ENCODE measurements at regions of chr6 and their contacts with region 1.

Region 1: DNA sequence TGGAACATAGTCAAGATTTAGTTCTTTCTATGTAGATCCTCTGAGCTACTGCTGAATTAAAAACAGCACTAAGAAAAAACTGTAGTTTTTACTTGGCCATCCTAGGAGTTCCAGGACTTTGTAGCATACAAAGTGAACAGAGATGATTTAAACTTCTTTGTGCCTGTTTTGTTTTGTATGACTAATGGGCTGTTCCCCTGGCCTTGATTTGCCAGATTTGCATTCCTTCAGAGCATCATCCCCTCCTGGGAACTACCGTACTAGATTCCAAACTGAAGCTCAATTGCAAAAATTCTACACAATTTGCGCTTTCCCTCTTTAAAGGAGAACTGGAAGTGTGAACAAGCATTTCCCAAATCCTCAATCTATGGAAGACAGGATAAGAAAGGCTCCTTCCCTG is 23.1 kb downstream of the ACOT13 start:
- DNase-seq: no peak
- ATAC-seq: no peak
- H3K4me3 ChIP-seq: no peak overlapping the region
- H3K4me3 Mint-ChIP-seq: no peak overlapping the region
- H3K27ac ChIP-seq: no peak overlapping the region
- H3K27ac Mint-ChIP-seq: peak overlapping the region in 1 of 9 donors; percentile 18
- H3K4me1 ChIP-seq: peaks cover 0 to 6% of the 10 kb centered on the region in 2 donors
- H3K4me1 Mint-ChIP-seq: peaks cover 7 to 24% (median 11%) of the 10 kb centered on the region in 7 donors
- H3K27me3 ChIP-seq: no peaks in the 10 kb centered on the region
- H3K27me3 Mint-ChIP-seq: no peaks in the 10 kb centered on the region

Region 2: GRCh38 chr6:24283043-24283985 is 406.6 kb before region 1 on chr6:
- CTCF ChIA-PET with region 1: no interaction called
- POLR2A ChIA-PET with region 1: no interaction called
- intact Hi-C with region 1: loop called (anchors 1 to 10 kb)
- DNase-seq: peak in 6 of 9 donors; percentile 13 to 50 (median 42)
- ATAC-seq: peak; percentile 81
- H3K4me3 ChIP-seq: no peak overlapping the region
- H3K4me3 Mint-ChIP-seq: peak overlapping the region; percentile 21 to 77 (median 50)
- H3K27ac ChIP-seq: no peak overlapping the region
- H3K27ac Mint-ChIP-seq: no peak overlapping the region
- H3K4me1 ChIP-seq: no peaks in the 10 kb centered on the region
- H3K4me1 Mint-ChIP-seq: peaks cover 0 to 7% (median 6%) of the 10 kb centered on the region in 7 donors
- H3K27me3 ChIP-seq: no peaks in the 10 kb centered on the region
- H3K27me3 Mint-ChIP-seq: peaks cover 4 to 14% (median 9%) of the 10 kb centered on the region in 5 donors

Region 3: DNA sequence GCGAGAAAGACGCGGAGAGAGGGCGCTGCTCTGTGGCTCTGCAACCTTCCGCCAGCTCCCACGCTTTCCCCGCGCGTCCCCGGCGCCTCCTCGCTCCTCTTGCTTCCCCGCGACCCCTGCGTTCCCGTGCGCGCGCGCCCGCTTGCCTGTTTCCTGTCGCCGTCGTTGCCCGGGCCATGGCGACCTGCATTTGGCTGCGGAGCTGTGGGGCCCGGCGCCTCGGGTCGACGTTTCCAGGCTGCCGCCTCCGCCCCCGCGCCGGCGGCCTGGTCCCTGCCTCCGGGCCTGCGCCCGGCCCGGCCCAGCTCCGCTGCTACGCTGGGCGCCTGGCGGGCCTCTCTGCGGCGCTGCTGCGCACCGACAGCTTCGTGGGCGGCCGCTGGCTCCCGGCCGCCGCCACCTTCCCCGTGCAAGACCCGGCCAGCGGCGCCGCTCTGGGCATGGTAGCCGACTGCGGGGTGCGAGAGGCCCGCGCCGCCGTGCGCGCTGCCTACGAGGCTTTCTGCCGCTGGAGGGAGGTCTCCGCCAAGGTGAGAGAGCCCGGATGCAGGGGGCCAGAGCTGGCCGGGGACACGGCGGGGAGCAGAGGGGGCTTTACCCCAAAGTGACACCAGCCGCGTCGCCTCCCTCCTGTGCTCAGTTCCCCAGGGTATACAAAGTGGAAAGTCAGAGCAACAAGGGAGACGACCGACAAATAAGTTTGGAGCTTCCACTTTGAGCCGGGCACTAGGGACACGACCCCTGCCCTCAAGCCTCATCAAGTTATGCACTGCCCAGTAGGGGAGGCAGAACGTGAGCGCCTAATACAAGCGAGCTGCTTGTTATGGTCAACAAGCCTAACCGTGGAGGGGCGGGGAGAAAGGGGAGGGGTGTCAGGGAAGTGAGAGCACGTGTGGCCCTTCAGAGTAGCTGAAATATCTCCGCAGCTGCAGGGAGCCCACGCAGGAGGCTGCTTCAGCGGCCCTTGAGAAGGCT is 194.9 kb before region 1 on chr6 and contains the start of gene ALDH5A1:
- CTCF ChIA-PET with region 1: no interaction called
- POLR2A ChIA-PET with region 1: no interaction called
- intact Hi-C with region 1: loop called in 1 of 2 experiments (anchors 1 kb)
- DNase-seq: peak; percentile 63 to 86 (median 84)
- ATAC-seq: peak; percentile 89
- H3K4me3 ChIP-seq: peak within 1 kb of the TSS; percentile 74
- H3K4me3 Mint-ChIP-seq: peak within 1 kb of the TSS; percentile 84 to 91 (median 88)
- H3K27ac ChIP-seq: peak within 1 kb of the TSS; percentile 63
- H3K27ac Mint-ChIP-seq: peak within 1 kb of the TSS; percentile 30 to 88 (median 74)
- H3K4me1 ChIP-seq: peaks cover 12 to 15% of the 10 kb centered on the region in 2 donors
- H3K4me1 Mint-ChIP-seq: peaks cover 13 to 50% (median 31%) of the 10 kb centered on the region in 7 donors
- H3K27me3 ChIP-seq: no peaks in the 10 kb centered on the region
- H3K27me3 Mint-ChIP-seq: peaks cover 0 to 2% (median 0%) of the 10 kb centered on the region in 5 donors
- total RNA-seq, gene ALDH5A1: 5.7 to 20.6 (median 8.9) TPM

Region 4: GRCh38 chr6:24547243-24547642 is 142.7 kb before region 1 on chr6:
- CTCF ChIA-PET with region 1: no interaction called
- POLR2A ChIA-PET with region 1: no interaction called
- intact Hi-C with region 1: loop called in 1 of 2 experiments (anchors 1 kb)
- DNase-seq: peak in 8 of 9 donors; percentile 19 to 52 (median 32)
- ATAC-seq: peak; percentile 62
- H3K4me3 ChIP-seq: no peak overlapping the region
- H3K4me3 Mint-ChIP-seq: peak overlapping the region in 3 of 10 donors; percentile 9 to 21 (median 21)
- H3K27ac ChIP-seq: no peak overlapping the region
- H3K27ac Mint-ChIP-seq: no peak overlapping the region
- H3K4me1 ChIP-seq: peaks cover 0 to 5% of the 10 kb centered on the region in 2 donors
- H3K4me1 Mint-ChIP-seq: peaks cover 0 to 10% (median 8%) of the 10 kb centered on the region in 7 donors
- H3K27me3 ChIP-seq: no peaks in the 10 kb centered on the region
- H3K27me3 Mint-ChIP-seq: peaks cover 0 to 27% (median 9%) of the 10 kb centered on the region in 5 donors

Region 5: GRCh38 chr6:24673625-24674024 is 16.3 kb before region 1 on chr6:
- CTCF ChIA-PET with region 1: no interaction called
- POLR2A ChIA-PET with region 1: no interaction called
- intact Hi-C with region 1: no loop called
- DNase-seq: no peak
- ATAC-seq: no peak
- H3K4me3 ChIP-seq: no peak overlapping the region
- H3K4me3 Mint-ChIP-seq: no peak overlapping the region
- H3K27ac ChIP-seq: no peak overlapping the region
- H3K27ac Mint-ChIP-seq: no peak overlapping the region
- H3K4me1 ChIP-seq: no peaks in the 10 kb centered on the region
- H3K4me1 Mint-ChIP-seq: peaks cover 0 to 14% (median 7%) of the 10 kb centered on the region in 7 donors
- H3K27me3 ChIP-seq: no peaks in the 10 kb centered on the region
- H3K27me3 Mint-ChIP-seq: no peaks in the 10 kb centered on the region

Region 6: GRCh38 chr6:25070547-25071366 is 380.8 kb after region 1 on chr6:
- CTCF ChIA-PET with region 1: no interaction called
- POLR2A ChIA-PET with region 1: no interaction called
- intact Hi-C with region 1: loop called in 1 of 2 experiments (anchors 1 kb)
- DNase-seq: peak; percentile 54 to 85 (median 79)
- ATAC-seq: peak; percentile 99
- H3K4me3 ChIP-seq: no peak overlapping the region
- H3K4me3 Mint-ChIP-seq: peak overlapping the region in 8 of 10 donors; percentile 10 to 70 (median 50)
- H3K27ac ChIP-seq: no peak overlapping the region
- H3K27ac Mint-ChIP-seq: peak overlapping the region; percentile 43 to 92 (median 83)
- H3K4me1 ChIP-seq: peaks cover 0 to 3% of the 10 kb centered on the region in 2 donors
- H3K4me1 Mint-ChIP-seq: peaks cover 5 to 15% (median 9%) of the 10 kb centered on the region in 7 donors
- H3K27me3 ChIP-seq: no peaks in the 10 kb centered on the region
- H3K27me3 Mint-ChIP-seq: peaks cover 0 to 7% (median 0%) of the 10 kb centered on the region in 5 donors

Measured in naive thymus-derived CD4-positive, alpha-beta T cell (primary cell).